Activated CD4-positive, alpha-beta T cell treated with anti-CD3 and anti-CD28 coated beads for 36 hours (primary cell): ENCODE measurements at regions of chr18 and their contacts with region 1.

Region 1: DNA sequence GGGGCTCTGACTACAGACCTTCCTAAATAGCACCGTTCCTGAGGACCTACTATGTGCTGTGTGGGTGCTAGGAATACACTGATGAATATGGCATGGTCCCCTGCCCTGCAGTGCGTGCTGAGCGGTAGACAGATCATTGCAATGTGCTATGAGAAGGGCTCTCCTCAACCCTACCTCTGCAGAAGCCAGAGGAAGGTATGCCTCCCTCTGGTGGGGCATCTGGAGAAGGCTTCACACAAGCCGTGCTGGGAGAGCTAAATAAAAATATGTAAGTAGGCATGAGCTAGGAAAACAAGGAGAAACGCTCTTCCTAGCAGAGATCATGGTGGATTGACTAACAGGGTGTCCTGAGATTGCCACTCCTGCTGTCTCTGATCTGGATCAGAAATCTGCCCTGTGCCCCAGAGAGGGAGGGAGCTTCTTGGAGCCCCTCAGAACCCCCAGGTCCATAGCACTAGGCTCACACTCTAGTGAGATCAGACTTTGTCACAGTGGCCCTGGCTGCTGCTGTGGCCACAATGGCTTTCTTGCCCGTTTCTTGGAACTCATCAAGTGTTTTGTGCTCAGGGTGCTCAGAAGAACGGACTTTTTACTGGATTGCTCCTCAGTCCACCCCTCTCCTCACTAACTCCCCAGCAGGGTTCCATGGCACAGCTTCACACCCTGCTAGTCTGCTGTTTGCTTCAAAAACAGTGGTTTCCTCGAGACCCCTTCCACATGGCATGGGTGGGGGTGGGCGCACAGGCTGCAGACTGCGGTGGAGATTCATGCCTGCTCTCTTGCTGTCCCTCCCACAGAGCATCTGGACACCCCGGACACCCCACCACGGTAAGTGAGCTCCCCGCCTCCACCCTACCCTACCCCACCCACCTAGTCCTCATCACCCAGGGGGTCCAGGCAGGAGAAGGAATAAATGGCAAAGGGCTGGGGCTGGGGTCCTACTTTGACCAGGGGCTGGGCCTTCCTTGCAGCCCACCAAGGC is 14.2 kb downstream of the SIGLEC15 start:
- DNase-seq: peak; percentile 63
- ATAC-seq: peak; percentile 73
- H3K4me3 Mint-ChIP-seq: no peak overlapping the region
- H3K27ac Mint-ChIP-seq: no peak overlapping the region
- H3K4me1 Mint-ChIP-seq: peaks cover 10% of the 10 kb centered on the region
- H3K27me3 Mint-ChIP-seq: peaks cover 38% of the 10 kb centered on the region

Region 2: GRCh38 chr18:45722899-45723298 is 116.8 kb before region 1 on chr18:
- CTCF ChIA-PET with region 1: interaction called, 7 read pairs
- POLR2A ChIA-PET with region 1: no interaction called
- intact Hi-C with region 1: loop called in 1 of 2 experiments (anchors 2 kb)
- DNase-seq: peak; percentile 89
- ATAC-seq: peak; percentile 97
- H3K4me3 Mint-ChIP-seq: no peak overlapping the region
- H3K27ac Mint-ChIP-seq: no peak overlapping the region
- H3K4me1 Mint-ChIP-seq: no peaks in the 10 kb centered on the region
- H3K27me3 Mint-ChIP-seq: no peaks in the 10 kb centered on the region

Region 3: DNA sequence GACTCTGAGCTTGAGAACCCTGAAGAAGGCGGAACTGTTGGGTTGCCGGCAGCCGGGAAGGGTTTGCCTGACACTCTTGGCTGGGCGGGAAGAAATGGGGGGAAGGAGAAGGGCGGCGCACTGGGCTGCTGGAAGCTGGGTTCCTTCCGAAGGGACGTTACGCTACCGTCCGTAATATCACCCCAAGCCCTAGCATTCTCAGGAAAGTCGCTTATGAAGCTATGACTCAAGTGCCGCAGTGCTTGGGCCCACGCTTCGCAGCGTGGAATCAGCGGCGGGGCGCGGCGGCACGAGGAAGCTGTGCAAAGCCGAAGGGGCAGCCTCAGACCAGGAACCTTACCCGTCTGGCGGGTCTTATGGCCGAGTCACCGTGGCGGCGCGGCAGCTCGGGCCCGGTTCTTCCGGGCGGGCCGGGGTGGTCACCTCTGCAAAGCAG is 64.4 kb before region 1 on chr18:
- CTCF ChIA-PET with region 1: interaction called, 4 read pairs
- POLR2A ChIA-PET with region 1: no interaction called
- intact Hi-C with region 1: loop called in 1 of 2 experiments (anchors 5 kb)
- DNase-seq: peak; percentile 85
- ATAC-seq: peak; percentile 95
- H3K4me3 Mint-ChIP-seq: peak overlapping the region; percentile 75
- H3K27ac Mint-ChIP-seq: peak overlapping the region; percentile 49
- H3K4me1 Mint-ChIP-seq: peaks cover 16% of the 10 kb centered on the region
- H3K27me3 Mint-ChIP-seq: peaks cover 29% of the 10 kb centered on the region